ENCODE measurements at regions of chr15 and their contacts with region 1.

Region 1: GRCh38 chr15:55649054-55649423 is 60.9 kb upstream of the PYGO1 start:
- DNase-seq: no peak
- H3K4me3 Mint-ChIP-seq: no peak overlapping the region
- H3K27ac Mint-ChIP-seq: no peak overlapping the region
- H3K4me1 Mint-ChIP-seq: no peaks in the 10 kb centered on the region
- H3K27me3 Mint-ChIP-seq: no peaks in the 10 kb centered on the region
- CTCF ChIP-seq: no peak

Region 2: DNA sequence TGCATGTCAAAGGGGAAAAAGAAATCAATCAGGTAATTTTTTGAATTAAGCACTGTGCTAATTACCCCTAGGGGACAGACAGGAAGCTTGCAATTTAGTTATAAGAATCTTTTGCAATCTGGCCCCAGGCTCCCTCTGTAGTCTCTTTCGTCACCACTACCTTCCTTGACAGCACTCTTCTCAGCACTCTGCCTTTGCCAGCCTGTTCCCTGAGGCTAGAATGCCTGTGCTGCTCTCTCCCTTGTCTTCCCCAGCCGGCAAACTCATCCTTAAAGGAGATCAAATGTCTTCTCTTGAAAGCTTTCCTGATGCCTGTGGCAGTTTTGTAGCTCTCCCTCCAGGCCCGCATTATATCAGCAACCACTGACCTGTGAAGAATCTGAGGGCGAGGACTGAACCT is 126.3 kb after region 1 on chr15:
- CTCF ChIA-PET with region 1: interaction called, 11 read pairs
- POLR2A ChIA-PET with region 1: no interaction called
- intact Hi-C with region 1: no loop called
- DNase-seq: peak; percentile 83
- H3K4me3 Mint-ChIP-seq: no peak overlapping the region
- H3K27ac Mint-ChIP-seq: peak overlapping the region; percentile 39
- H3K4me1 Mint-ChIP-seq: peaks cover 7% of the 10 kb centered on the region
- H3K27me3 Mint-ChIP-seq: peaks cover 7% of the 10 kb centered on the region
- CTCF ChIP-seq: no peak

Region 3: DNA sequence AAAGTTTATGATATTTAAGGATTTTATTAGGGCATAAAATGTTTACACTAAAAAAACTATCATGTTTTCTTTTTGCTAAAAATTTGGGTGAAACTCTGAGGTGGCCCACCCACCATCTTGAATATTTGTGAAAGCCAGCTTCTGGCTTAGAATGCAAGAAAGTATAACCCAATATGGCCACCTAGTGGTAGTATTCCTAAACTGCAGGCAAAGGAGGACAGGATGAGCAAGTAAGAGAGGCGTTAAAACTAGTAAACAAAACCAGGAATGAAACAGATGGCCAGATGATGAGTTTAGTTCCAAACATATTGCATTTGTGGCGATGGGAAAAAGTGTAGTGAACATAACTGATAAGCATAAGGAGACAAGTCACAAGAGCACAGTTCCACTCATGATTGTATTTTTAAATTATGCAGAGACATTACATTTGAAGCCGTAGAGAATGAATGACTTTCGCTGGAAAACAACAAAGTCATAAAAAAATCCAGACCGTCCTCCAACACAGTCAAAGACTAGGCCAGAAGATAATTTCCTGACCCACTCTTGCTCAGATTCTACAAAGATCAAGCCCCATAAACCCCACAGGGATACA is 197.2 kb after region 1 on chr15:
- CTCF ChIA-PET with region 1: interaction called, 66 read pairs
- POLR2A ChIA-PET with region 1: interaction called, 3 read pairs
- intact Hi-C with region 1: loop called (anchors 1 kb)
- DNase-seq: peak; percentile 81
- H3K4me3 Mint-ChIP-seq: no peak overlapping the region
- H3K27ac Mint-ChIP-seq: no peak overlapping the region
- H3K4me1 Mint-ChIP-seq: peaks cover 6% of the 10 kb centered on the region
- H3K27me3 Mint-ChIP-seq: no peaks in the 10 kb centered on the region
- CTCF ChIP-seq: peak; percentile 79

Region 4: DNA sequence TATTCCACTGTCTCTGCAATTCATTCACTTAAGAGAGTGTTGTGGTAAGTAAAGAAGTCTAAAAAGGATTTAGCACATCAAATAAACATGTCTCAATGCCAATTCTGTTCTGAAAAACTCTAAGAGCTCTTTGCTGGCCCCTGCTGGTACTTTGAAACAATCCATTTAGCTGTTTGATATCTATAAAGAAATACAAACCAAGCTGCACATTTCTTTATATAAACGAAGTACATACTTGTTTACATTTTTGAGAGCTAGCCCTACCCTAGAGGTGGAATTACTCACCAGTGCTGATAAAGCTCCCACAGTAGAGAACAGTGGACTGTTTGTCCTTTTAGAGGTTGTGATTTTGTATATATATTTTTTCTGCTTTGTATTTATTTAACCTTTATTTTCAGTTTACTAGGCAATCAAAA is 268.9 kb after region 1 on chr15:
- CTCF ChIA-PET with region 1: interaction called, 5 read pairs
- POLR2A ChIA-PET with region 1: interaction called, 8 read pairs
- intact Hi-C with region 1: loop called (anchors 2 kb)
- DNase-seq: peak; percentile 88
- H3K4me3 Mint-ChIP-seq: no peak overlapping the region
- H3K27ac Mint-ChIP-seq: peak overlapping the region; percentile 67
- H3K4me1 Mint-ChIP-seq: peaks cover 17% of the 10 kb centered on the region
- H3K27me3 Mint-ChIP-seq: no peaks in the 10 kb centered on the region
- CTCF ChIP-seq: peak; percentile 52

Region 5: DNA sequence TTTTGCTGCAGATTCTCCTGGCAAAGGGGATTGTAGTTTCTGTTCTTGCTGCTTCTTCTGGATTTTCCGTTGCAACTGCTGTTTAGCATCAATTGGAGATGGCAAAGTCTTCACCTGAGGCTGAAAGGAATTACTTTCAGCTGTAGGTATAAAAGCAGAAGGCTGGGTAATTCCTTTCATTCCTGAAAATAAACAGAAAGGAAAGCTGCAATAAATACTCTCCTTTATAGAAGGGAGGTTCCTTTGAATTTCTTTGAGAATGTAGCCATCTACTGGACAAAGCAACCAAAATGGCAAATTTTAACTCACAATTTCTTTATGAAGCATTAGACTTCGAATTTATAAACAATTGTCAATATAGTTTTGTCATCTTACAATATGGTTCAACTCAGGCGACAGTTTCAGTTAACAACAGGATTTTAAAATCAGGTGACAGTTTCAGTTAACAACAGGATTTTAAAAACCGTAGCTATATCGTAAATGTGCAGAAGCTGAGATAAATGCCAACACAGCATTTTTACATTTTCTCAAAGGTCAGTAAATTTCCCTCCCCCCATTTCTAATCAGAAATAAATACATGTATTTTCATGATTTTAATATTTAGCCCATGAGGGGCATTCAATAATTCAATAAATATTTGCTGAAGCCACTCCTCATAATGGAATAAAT is 449.3 kb after region 1 on chr15:
- CTCF ChIA-PET with region 1: no interaction called
- POLR2A ChIA-PET with region 1: no interaction called
- intact Hi-C with region 1: loop called (anchors 5 kb)
- DNase-seq: no peak
- H3K4me3 Mint-ChIP-seq: no peak overlapping the region
- H3K27ac Mint-ChIP-seq: no peak overlapping the region
- H3K4me1 Mint-ChIP-seq: peaks cover 6% of the 10 kb centered on the region
- H3K27me3 Mint-ChIP-seq: no peaks in the 10 kb centered on the region
- CTCF ChIP-seq: no peak

Measured in MCF 10A (cell line).